Posterior cingulate gyrus (tissue), 11 donors: ENCODE measurements at regions of chr11 and their contacts with region 1.

Region 1: DNA sequence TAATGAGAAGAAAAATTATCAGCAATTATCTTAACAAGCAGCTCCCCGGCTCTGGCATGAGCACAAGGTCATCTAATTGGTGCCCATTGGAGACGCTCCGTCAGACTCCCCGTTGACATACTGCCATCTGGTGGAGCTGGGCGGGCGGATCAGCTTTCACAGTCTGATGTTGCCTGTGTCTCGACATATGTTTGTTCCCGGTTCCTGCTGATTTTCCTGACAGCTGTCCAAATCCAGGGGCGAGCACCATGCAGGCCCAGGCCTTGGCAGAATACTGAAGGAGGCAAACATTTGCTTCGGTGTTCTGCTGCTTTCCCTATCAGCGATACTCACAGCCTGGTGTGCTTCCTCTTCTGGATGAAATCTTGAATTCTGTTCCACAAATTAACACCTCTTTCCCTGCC is 43.8 kb upstream of the BARX2 start:
- DNase-seq: peak; percentile 69 to 97 (median 87)

Region 2: DNA sequence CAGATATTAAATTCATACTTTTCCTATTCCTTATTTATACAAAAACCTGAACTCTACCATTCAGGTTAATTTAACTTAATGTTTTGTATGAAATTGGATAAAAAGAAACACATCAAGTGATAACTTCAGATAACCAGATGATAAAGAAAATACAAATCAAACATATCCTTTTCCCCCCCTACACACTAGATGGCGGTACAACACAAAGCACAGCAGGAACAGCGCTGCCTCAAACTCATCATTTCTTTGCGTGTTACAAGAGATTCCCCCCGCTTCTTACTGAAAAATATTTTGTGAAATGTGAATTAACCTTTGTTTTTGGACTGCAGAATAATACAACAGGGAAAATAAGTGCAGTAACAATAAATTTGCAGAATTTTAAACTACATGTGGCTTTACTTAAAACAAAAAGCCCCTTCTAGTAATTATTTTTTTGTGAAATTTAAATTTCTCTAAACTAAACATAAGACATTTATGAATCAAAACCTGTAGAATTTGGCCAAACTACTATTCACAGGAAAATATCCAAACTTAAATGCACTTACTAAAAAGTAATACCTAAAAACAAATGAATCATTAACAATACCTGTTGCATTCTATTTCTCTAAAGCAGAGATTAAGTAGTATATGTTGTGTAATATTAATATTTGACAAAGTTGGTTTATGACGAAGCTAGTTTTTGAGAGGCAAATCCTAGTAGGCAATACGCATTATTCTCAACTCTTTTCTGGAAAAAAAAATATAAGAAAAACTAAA is 214.1 kb before region 1 on chr11:
- intact Hi-C with region 1: loop called (anchors 1 kb)
- DNase-seq: peak in 4 of 10 donors; percentile 26 to 86 (median 42)

Region 3: DNA sequence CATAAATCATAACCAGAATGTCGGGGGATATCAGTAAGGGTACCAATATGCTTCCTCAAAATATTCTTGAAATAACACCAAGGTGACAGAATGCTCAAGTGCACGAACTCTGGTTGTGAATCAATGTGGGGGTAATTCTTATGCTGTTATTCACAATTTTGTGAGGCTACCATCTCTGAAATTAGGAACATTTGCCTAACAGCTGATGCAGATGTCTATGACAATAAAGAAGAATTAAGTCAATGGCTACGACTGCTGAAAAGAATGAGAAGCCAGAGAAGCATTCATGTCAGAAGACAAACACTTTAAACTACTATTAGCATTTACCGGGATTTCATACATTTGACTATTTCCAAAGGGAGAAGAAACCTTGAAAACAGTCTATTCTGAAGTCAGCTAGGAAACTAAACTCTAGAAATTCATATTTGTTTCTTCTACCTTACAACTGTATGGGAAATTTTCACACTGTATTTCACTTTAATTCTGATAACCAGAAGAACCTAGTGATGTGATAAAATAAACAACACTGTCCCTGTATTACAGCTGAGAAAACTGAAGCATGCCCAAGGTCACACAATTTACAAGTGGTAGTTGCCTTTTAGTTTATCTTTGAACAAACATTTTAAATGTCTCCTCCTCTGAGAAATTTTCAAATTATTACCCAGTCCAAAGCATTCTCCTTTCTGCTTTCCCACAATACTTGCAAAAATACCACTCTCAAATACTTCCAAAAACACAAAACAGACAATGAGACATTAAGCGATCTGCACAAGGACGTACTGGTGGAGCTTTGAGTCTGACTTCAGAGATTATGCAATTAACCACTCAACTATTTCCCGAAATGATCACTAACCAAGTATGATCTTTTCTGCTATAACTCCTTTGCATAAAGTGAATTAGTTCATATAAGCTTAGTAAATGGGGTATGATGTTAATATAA is 121.7 kb before region 1 on chr11:
- intact Hi-C with region 1: no loop called
- DNase-seq: no peak

Region 4: GRCh38 chr11:129230006-129230405 is 101.9 kb before region 1 on chr11:
- intact Hi-C with region 1: loop called (anchors 1 kb)
- DNase-seq: no peak

Region 5: GRCh38 chr11:129458756-129459535 is 127.1 kb after region 1 on chr11:
- intact Hi-C with region 1: no loop called
- DNase-seq: peak in 1 of 10 donors; percentile 72